ENCODE measurements at regions of chr2 and their contacts with region 1.

Region 1: DNA sequence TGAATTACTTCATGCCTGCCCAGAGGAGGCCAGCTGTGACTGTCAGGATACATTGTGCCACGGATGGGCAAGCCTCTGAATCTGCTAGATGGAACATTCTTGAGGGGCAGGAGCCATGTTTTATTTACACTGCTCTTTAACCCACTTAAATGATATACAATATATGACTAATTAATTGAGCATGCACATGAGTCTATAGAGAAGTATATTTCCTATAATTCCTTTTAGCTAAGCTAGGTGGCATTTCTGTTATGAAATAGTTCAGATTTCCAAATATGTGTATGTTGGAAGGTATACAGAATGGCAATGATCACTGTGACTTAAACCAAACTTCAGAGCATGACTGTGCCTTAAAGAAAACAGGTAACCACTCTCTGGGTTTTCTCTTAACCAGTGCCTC is 131.7 kb downstream of the RAB3GAP1 start:
- DNase-seq: no peak
- H3K4me3 ChIP-seq: no peak overlapping the region
- H3K4me3 Mint-ChIP-seq: no peak overlapping the region
- H3K27ac Mint-ChIP-seq: no peak overlapping the region
- H3K4me1 ChIP-seq: no peaks in the 10 kb centered on the region
- H3K4me1 Mint-ChIP-seq: no peaks in the 10 kb centered on the region
- H3K27me3 ChIP-seq: no peaks in the 10 kb centered on the region
- H3K27me3 Mint-ChIP-seq: no peaks in the 10 kb centered on the region
- CTCF ChIP-seq: no peak

Region 2: GRCh38 chr2:135225781-135226180 is 42.0 kb after region 1 on chr2:
- CTCF ChIA-PET with region 1: no interaction called
- POLR2A ChIA-PET with region 1: interaction called, 11 read pairs
- intact Hi-C with region 1: no loop called
- DNase-seq: no peak
- H3K4me3 ChIP-seq: no peak overlapping the region
- H3K4me3 Mint-ChIP-seq: no peak overlapping the region
- H3K27ac Mint-ChIP-seq: no peak overlapping the region
- H3K4me1 ChIP-seq: no peaks in the 10 kb centered on the region
- H3K4me1 Mint-ChIP-seq: no peaks in the 10 kb centered on the region
- H3K27me3 ChIP-seq: no peaks in the 10 kb centered on the region
- H3K27me3 Mint-ChIP-seq: no peaks in the 10 kb centered on the region
- CTCF ChIP-seq: no peak